ENCODE measurements at regions of chr2 and their contacts with region 1.

Region 1: DNA sequence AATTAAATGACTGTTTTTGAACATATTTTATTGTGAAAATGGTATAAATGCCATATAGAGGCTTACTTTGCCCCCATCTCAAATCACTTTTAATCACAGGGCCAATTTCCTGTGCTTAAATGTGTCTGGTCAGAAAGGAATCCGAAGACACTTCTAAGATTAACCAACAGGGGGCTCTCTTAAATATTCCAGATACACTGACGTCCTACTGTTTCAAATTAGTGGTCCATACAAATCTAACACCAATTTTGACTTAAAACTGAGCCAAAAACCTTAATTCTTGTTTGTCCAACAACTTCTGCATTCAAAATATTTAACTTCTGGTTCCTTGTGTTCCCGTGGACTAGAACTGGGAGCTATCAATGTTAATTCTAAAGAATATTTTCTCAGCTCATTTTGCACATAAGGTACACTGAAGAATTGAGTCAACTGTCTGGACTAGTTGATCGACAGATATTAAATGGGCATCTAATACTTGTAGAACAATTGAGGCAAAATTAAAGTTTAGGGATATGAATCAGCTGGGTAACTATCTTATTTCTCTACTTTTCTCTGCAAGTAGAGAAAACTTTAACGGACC is 557.5 kb downstream of the ARHGAP15 start:
- DNase-seq: peak; percentile 35
- ATAC-seq: peak; percentile 78
- H3K4me3 ChIP-seq: no peak overlapping the region
- H3K27ac ChIP-seq: no peak overlapping the region
- H3K4me1 ChIP-seq: no peaks in the 10 kb centered on the region
- H3K27me3 ChIP-seq: no peaks in the 10 kb centered on the region
- CTCF ChIP-seq: peak; percentile 51
- EP300 ChIP-seq: no peak
- POLR2A ChIP-seq: no peak
- RAD21 ChIP-seq: no peak

Region 2: GRCh38 chr2:142572346-142573132 is 1114.1 kb before region 1 on chr2:
- CTCF ChIA-PET with region 1: no interaction called
- POLR2A ChIA-PET with region 1: no interaction called
- in situ Hi-C with region 1: no loop called
- intact Hi-C with region 1: no loop called
- DNase-seq: no peak
- ATAC-seq: no peak
- H3K4me3 ChIP-seq: no peak overlapping the region
- H3K27ac ChIP-seq: no peak overlapping the region
- H3K4me1 ChIP-seq: no peaks in the 10 kb centered on the region
- H3K27me3 ChIP-seq: no peaks in the 10 kb centered on the region
- CTCF ChIP-seq: no peak
- EP300 ChIP-seq: no peak
- POLR2A ChIP-seq: no peak
- RAD21 ChIP-seq: no peak

Region 3: GRCh38 chr2:143645921-143646645 is 40.6 kb before region 1 on chr2:
- CTCF ChIA-PET with region 1: no interaction called
- POLR2A ChIA-PET with region 1: no interaction called
- in situ Hi-C with region 1: no loop called
- intact Hi-C with region 1: loop called (anchors 1 kb)
- DNase-seq: no peak
- ATAC-seq: no peak
- H3K4me3 ChIP-seq: no peak overlapping the region
- H3K27ac ChIP-seq: no peak overlapping the region
- H3K4me1 ChIP-seq: no peaks in the 10 kb centered on the region
- H3K27me3 ChIP-seq: no peaks in the 10 kb centered on the region; a peak in 1 of 5 replicates
- CTCF ChIP-seq: no peak
- EP300 ChIP-seq: no peak
- POLR2A ChIP-seq: no peak
- RAD21 ChIP-seq: no peak

Region 4: GRCh38 chr2:143697744-143698143 is 11.1 kb after region 1 on chr2:
- CTCF ChIA-PET with region 1: no interaction called
- POLR2A ChIA-PET with region 1: no interaction called
- in situ Hi-C with region 1: no loop called
- intact Hi-C with region 1: no loop called
- DNase-seq: no peak
- ATAC-seq: no peak
- H3K4me3 ChIP-seq: no peak overlapping the region
- H3K27ac ChIP-seq: no peak overlapping the region
- H3K4me1 ChIP-seq: no peaks in the 10 kb centered on the region
- H3K27me3 ChIP-seq: no peaks in the 10 kb centered on the region
- CTCF ChIP-seq: no peak
- EP300 ChIP-seq: no peak
- POLR2A ChIP-seq: no peak
- RAD21 ChIP-seq: no peak

Region 5: GRCh38 chr2:143916781-143917180 is 230.1 kb after region 1 on chr2:
- CTCF ChIA-PET with region 1: no interaction called
- POLR2A ChIA-PET with region 1: no interaction called
- in situ Hi-C with region 1: no loop called
- intact Hi-C with region 1: no loop called
- DNase-seq: no peak
- ATAC-seq: no peak
- H3K4me3 ChIP-seq: no peak overlapping the region
- H3K27ac ChIP-seq: no peak overlapping the region
- H3K4me1 ChIP-seq: no peaks in the 10 kb centered on the region
- H3K27me3 ChIP-seq: no peaks in the 10 kb centered on the region
- CTCF ChIP-seq: no peak
- EP300 ChIP-seq: no peak
- POLR2A ChIP-seq: no peak
- RAD21 ChIP-seq: no peak

Region 6: DNA sequence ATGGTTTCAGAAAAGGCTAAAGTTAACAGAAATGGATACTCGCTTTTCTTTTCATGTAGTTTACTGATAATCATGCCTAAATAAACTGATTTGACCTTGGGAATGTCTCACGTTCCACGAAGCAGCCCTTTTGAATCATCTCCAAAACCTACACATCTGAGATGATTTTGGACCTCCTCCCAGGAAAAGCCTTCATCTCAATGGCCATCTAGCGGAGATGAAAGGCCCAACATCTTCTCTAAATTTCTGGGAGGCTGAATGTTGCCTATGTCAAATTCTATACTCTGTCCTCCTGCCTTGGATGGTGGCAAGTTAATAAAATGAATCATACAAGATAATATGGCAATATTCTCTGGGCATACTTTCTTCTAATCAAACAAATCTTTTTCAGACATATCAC is 384.8 kb after region 1 on chr2:
- CTCF ChIA-PET with region 1: no interaction called
- POLR2A ChIA-PET with region 1: no interaction called
- in situ Hi-C with region 1: no loop called
- intact Hi-C with region 1: loop called (anchors 1 kb)
- DNase-seq: peak; percentile 7
- ATAC-seq: peak; percentile 69
- H3K4me3 ChIP-seq: no peak overlapping the region
- H3K27ac ChIP-seq: no peak overlapping the region
- H3K4me1 ChIP-seq: no peaks in the 10 kb centered on the region
- H3K27me3 ChIP-seq: no peaks in the 10 kb centered on the region
- CTCF ChIP-seq: peak; percentile 44
- EP300 ChIP-seq: no peak
- POLR2A ChIP-seq: no peak
- RAD21 ChIP-seq: no peak

Measured in HepG2 (cell line).